Mammary epithelial cell (primary cell): ENCODE measurements at regions of chr1 and their contacts with region 1.

Region 1: DNA sequence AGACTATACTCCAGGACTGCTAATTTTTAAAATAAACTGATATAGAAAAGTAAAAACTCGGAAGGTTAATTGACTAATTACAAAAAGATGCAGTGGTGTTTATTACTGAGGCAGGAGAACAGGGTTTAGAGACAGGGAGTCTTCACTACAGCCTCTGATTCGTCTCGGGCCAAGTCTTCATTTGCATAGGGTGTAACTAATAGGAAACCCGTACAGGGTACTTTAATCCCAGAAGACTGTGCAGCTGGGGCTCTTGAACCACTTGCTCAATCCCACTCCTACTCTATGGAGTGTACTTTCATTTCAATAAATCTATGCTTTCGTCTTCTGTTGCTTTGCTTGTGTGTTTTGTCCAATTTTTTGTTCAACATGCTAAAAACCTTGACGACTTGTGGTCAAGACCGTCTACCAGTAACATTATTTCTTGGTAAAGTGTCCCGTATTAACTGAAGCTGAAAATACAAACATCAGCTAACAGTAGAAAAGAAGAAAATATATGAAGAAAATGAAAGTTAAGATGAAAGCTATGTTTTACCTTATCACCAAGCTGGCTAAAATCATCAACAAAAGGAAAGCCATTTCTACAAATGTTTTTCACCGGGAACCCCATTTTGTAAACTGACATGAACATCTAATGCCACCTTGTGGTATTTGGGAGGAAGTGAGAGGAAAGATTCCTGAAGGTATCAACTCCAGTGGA is 8.0 kb downstream of the SDHB start:
- DNase-seq: peak; percentile 39
- H3K4me3 ChIP-seq: no peak overlapping the region
- H3K27ac ChIP-seq: no peak overlapping the region
- H3K4me1 ChIP-seq: peaks cover 3% of the 10 kb centered on the region
- H3K27me3 ChIP-seq: no peaks in the 10 kb centered on the region
- CTCF ChIP-seq: peak; percentile 74 to 80

Region 2: GRCh38 chr1:16618719-16619118 is 427.1 kb before region 1 on chr1:
- CTCF ChIA-PET with region 1: no interaction called
- dilution Hi-C with region 1: no loop called
- in situ Hi-C with region 1: loop called in 1 of 2 experiments (anchors 25 kb)
- intact Hi-C with region 1: loop called (anchors 1 kb)
- DNase-seq: no peak
- H3K4me3 ChIP-seq: no peak overlapping the region
- H3K27ac ChIP-seq: no peak overlapping the region
- H3K4me1 ChIP-seq: peaks cover 26% of the 10 kb centered on the region
- H3K27me3 ChIP-seq: no peaks in the 10 kb centered on the region
- CTCF ChIP-seq: no peak

Region 3: GRCh38 chr1:16904560-16905111 is 141.1 kb before region 1 on chr1:
- CTCF ChIA-PET with region 1: no interaction called
- dilution Hi-C with region 1: no loop called
- in situ Hi-C with region 1: no loop called
- intact Hi-C with region 1: loop called (anchors 2 kb)
- DNase-seq: peak; percentile 97
- H3K4me3 ChIP-seq: peak overlapping the region; percentile 52 to 69 (median 54)
- H3K27ac ChIP-seq: peak overlapping the region; percentile 100
- H3K4me1 ChIP-seq: peaks cover 19% of the 10 kb centered on the region
- H3K27me3 ChIP-seq: no peaks in the 10 kb centered on the region
- CTCF ChIP-seq: no peak

Region 4: GRCh38 chr1:16955186-16955585 is 90.6 kb before region 1 on chr1:
- CTCF ChIA-PET with region 1: no interaction called
- dilution Hi-C with region 1: no loop called
- in situ Hi-C with region 1: loop called (anchors 5 kb)
- intact Hi-C with region 1: loop called (anchors 1 kb)
- DNase-seq: no peak
- H3K4me3 ChIP-seq: no peak overlapping the region
- H3K27ac ChIP-seq: no peak overlapping the region
- H3K4me1 ChIP-seq: peaks cover 4% of the 10 kb centered on the region
- H3K27me3 ChIP-seq: no peaks in the 10 kb centered on the region
- CTCF ChIP-seq: no peak

Region 5: DNA sequence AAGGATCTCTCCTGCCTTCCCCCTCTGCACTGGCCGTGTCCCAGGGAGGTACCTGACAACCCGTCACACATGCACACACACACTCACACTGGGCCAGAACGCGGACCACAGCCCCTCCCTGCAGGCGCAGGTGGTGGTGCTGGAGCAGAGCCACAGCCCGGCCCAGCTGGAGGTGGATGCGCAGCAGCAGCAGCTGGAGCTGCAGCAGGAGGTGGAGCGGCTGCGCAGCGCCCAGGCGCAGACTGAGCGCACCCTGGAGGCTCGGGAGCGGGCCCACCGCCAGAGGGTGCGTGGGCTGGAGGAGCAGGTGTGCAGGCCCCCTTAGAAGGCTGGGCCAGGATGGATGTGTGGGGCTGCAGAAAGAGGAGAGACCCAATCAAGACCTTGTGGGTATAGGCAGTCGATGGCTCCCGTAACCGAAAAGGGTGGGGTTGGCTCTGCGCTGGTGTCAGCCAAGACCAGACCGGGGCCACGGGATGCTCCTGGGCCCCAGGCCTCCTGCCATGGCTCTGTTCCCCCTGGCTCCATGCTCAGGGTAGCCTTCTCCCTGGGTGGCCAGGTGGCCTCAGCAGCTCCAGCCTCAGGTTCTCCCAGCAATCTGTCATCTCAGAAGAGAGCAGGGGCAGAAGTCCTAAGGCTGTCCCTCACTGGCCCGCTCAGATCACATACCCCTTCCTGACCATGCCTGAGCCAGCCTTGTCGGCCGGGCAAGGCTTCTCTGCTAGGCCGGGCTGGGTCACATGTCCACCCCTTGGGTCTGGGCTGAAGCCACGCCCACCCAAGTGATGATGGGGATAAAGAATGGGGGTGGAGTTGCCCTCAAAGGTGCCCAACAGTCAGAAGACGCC is 74.2 kb before region 1 on chr1:
- CTCF ChIA-PET with region 1: no interaction called
- dilution Hi-C with region 1: loop called (anchors 5 kb)
- in situ Hi-C with region 1: no loop called
- intact Hi-C with region 1: no loop called
- DNase-seq: no peak
- H3K4me3 ChIP-seq: no peak overlapping the region
- H3K27ac ChIP-seq: no peak overlapping the region
- H3K4me1 ChIP-seq: peaks cover 7% of the 10 kb centered on the region
- H3K27me3 ChIP-seq: no peaks in the 10 kb centered on the region
- CTCF ChIP-seq: no peak

Region 6: DNA sequence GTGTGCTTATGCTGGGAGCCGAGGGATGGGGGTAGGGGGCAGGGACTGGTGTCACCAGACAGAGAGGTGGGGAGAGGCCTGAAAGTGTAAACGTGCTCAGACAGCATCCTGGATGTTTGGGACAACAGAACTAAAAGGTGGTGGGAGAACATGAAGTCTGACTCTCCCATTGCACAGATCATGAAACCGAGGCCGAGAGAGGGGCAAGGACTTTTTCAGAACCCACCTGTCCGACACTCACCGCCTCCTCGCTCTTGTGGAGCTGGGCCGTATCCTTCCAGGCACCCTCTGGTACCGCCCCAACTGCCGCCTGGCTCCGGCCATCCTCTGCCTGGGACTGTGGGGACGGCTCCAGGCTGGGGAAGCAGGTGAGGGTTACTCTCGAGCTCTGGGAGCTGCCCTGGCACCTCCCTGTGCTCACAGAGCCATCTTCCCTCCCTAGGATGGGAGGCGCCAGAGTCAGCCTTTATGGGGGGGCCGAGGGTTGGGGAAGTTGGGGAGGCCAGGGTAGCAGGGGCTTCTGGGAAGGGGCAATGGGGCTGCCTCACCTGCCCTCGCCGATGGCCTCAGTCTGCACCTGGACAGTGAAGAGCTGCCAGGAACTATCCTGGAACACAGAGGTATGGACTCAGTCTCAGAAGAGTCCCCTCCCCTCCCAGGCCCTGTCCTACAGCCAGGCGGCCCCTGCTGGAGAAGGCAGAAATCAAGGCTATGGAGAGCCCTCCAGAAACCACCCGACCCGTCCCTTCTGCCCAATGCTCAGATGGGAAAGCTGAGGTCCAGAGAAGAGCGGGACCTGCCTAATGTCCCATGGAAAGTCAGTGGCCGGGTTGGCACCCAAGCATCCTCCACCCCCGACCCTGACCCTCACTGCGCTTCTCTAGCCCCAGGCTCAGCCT is 41.1 kb before region 1 on chr1:
- CTCF ChIA-PET with region 1: no interaction called
- dilution Hi-C with region 1: loop called (anchors 5 kb)
- in situ Hi-C with region 1: no loop called
- intact Hi-C with region 1: no loop called
- DNase-seq: no peak
- H3K4me3 ChIP-seq: no peak overlapping the region
- H3K27ac ChIP-seq: no peak overlapping the region
- H3K4me1 ChIP-seq: peaks cover 10% of the 10 kb centered on the region
- H3K27me3 ChIP-seq: no peaks in the 10 kb centered on the region
- CTCF ChIP-seq: no peak